ENCODE measurements at regions of chr16 and their contacts with region 1.

Region 1: DNA sequence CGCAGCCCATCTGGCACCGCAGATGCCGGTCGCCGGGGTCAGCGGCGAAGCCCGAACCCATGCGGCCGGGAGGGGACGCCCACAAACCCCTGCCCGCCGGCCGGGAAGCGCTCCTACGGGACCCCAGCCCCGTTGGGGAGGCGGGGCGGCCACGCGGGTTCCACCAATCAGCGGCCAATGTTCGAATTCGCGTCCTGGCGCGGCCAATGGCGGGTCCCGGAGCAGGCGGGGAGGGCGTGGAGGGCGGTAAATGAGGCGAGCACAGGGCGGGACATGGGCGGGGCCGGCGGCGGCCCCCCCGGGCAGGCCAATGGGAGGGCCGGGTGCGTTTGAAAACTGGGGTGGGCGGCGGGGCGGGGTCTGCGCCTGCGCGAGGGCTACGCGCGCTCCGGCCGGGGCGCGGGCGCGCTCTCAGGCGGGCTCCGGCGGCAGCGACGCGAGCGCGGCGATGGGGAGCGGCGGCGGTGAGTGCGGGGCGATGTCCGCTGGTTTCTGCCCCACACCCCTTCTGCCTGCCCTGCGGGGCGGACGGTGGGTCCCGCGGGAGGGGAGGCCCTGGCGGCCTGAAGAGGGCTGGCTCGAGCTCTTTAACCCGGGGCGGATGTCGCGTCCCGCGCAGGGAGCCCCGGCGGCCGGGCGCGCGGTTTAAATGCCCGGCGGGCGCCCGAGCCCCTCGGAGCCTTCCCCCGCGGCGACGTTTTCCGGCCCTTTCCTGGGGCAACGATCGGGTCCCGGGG is at the start of gene CCNF:
- DNase-seq: peak; percentile 99
- ATAC-seq: peak; percentile 97
- H3K4me3 Mint-ChIP-seq: peak within 1 kb of the TSS; percentile 97
- H3K27ac Mint-ChIP-seq: peak within 1 kb of the TSS; percentile 76
- H3K4me1 Mint-ChIP-seq: peaks cover 16% of the 10 kb centered on the region
- H3K27me3 Mint-ChIP-seq: no peaks in the 10 kb centered on the region
- total RNA-seq, gene CCNF: 52.2 to 53.4 TPM

Region 2: GRCh38 chr16:2047330-2048115 is 381.7 kb before region 1 on chr16 and contains the starts of genes NTHL1 and TSC2:
- CTCF ChIA-PET with region 1: no interaction called
- POLR2A ChIA-PET with region 1: no interaction called
- intact Hi-C with region 1: loop called in 1 of 2 experiments (anchors 2 kb)
- DNase-seq: peak; percentile 97
- ATAC-seq: peak; percentile 97
- H3K4me3 Mint-ChIP-seq: peak within 1 kb of the TSS; percentile 89
- H3K27ac Mint-ChIP-seq: peak within 1 kb of the TSS; percentile 85
- H3K4me1 Mint-ChIP-seq: peaks cover 18% of the 10 kb centered on the region
- H3K27me3 Mint-ChIP-seq: no peaks in the 10 kb centered on the region
- total RNA-seq, gene NTHL1: 22.6 to 26.1 TPM
- total RNA-seq, gene TSC2: 49.6 to 72.9 TPM

Region 3: GRCh38 chr16:2251483-2252240 is 177.5 kb before region 1 on chr16 and contains the start of gene ECI1:
- CTCF ChIA-PET with region 1: no interaction called
- POLR2A ChIA-PET with region 1: no interaction called
- intact Hi-C with region 1: loop called in 1 of 2 experiments (anchors 5 kb)
- DNase-seq: peak; percentile 92
- ATAC-seq: peak; percentile 87
- H3K4me3 Mint-ChIP-seq: peak within 1 kb of the TSS; percentile 90
- H3K27ac Mint-ChIP-seq: peak within 1 kb of the TSS; percentile 90
- H3K4me1 Mint-ChIP-seq: peaks cover 5% of the 10 kb centered on the region
- H3K27me3 Mint-ChIP-seq: no peaks in the 10 kb centered on the region
- total RNA-seq, gene ECI1: 23.0 to 41.0 TPM

Region 4: GRCh38 chr16:2350500-2350899 is 78.7 kb before region 1 on chr16:
- CTCF ChIA-PET with region 1: no interaction called
- POLR2A ChIA-PET with region 1: no interaction called
- intact Hi-C with region 1: no loop called
- DNase-seq: no peak
- ATAC-seq: no peak
- H3K4me3 Mint-ChIP-seq: no peak overlapping the region
- H3K27ac Mint-ChIP-seq: no peak overlapping the region
- H3K4me1 Mint-ChIP-seq: no peaks in the 10 kb centered on the region
- H3K27me3 Mint-ChIP-seq: peaks cover 9% of the 10 kb centered on the region

Region 5: DNA sequence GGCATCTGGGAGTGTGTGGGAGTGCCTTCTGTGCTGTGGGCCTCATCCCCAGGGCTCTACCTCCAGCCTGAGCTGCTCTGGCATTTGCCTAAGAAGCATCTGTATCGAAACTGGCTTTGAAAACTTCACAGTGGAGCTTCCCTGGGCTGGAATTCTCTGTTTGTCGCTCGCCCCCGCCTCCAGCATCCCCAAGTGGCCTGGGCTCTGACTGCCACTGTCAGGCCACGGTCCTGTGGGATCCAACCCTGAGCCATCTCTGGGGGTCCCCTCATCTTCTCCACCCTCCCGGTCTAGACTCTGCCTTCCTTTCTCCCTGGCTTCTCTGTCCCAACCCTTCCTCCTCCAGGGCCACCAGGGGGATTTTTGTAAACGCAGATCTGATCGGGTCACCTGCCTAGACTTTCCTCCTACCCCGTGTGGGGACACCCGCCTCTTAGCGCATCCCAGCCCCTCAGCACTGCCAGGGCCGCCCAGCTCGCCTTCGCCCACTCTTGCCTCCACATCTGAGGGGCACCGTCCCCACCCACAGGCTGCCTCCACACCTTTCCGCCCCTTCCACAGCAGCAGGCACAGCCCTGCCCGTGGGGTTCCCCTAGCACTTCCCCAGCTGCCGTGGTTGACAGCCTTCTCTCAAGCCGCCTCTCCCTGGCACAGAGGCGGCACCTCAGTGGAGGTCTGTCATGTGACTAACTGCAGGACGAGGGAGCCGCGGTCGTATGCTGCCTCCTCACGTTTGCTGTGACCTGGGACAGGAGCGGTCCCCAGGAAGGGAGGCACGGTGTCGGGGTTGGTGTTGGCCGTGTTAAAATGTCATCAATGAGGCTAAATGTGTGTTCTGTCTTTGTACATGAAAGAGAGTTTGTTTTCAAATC is 57.7 kb after region 1 on chr16:
- CTCF ChIA-PET with region 1: interaction called, 3 read pairs
- POLR2A ChIA-PET with region 1: no interaction called
- intact Hi-C with region 1: loop called in 1 of 2 experiments (anchors 1 kb)
- DNase-seq: peak; percentile 90
- ATAC-seq: peak; percentile 99
- H3K4me3 Mint-ChIP-seq: peak overlapping the region; percentile 51
- H3K27ac Mint-ChIP-seq: peak overlapping the region; percentile 70
- H3K4me1 Mint-ChIP-seq: peaks cover 14% of the 10 kb centered on the region
- H3K27me3 Mint-ChIP-seq: no peaks in the 10 kb centered on the region

Region 6: GRCh38 chr16:2537453-2538379 is 108.5 kb after region 1 on chr16 and contains the start of gene PDPK1:
- CTCF ChIA-PET with region 1: no interaction called
- POLR2A ChIA-PET with region 1: no interaction called
- intact Hi-C with region 1: loop called in 1 of 2 experiments (anchors 1 kb)
- DNase-seq: peak; percentile 97
- ATAC-seq: peak; percentile 93
- H3K4me3 Mint-ChIP-seq: peak within 1 kb of the TSS; percentile 83
- H3K27ac Mint-ChIP-seq: peak within 1 kb of the TSS; percentile 90
- H3K4me1 Mint-ChIP-seq: peaks cover 38% of the 10 kb centered on the region
- H3K27me3 Mint-ChIP-seq: no peaks in the 10 kb centered on the region
- total RNA-seq, gene PDPK1: 30.4 to 34.5 TPM

Measured in activated CD4-positive, alpha-beta T cell treated with anti-CD3 and anti-CD28 coated beads for 36 hours (primary cell).